Heart right ventricle (tissue), 16 donors: ENCODE measurements at regions of chr6 and their contacts with region 1.

Region 1: GRCh38 chr6:104771258-104771832 is 88.4 kb downstream of the HACE1 start:
- DNase-seq: no peak
- ATAC-seq: peak in 1 of 8 donors; percentile 33
- H3K4me3 ChIP-seq: no peak overlapping the region
- H3K27ac ChIP-seq: no peak overlapping the region
- H3K4me1 ChIP-seq: no peaks in the 10 kb centered on the region
- H3K27me3 ChIP-seq: no peaks in the 10 kb centered on the region
- CTCF ChIP-seq: peak; percentile 13 to 70 (median 55)

Region 2: GRCh38 chr6:104325341-104326172 is 445.8 kb before region 1 on chr6:
- intact Hi-C with region 1: loop called in 1 of 10 experiments (anchors 10 kb)
- DNase-seq: no peak
- ATAC-seq: no peak
- H3K4me3 ChIP-seq: no peak overlapping the region
- H3K27ac ChIP-seq: no peak overlapping the region
- H3K4me1 ChIP-seq: peaks cover 0 to 5% (median 0%) of the 10 kb centered on the region in 9 donors
- H3K27me3 ChIP-seq: peaks cover 0 to 15% (median 0%) of the 10 kb centered on the region in 7 donors
- CTCF ChIP-seq: peak in 7 of 9 donors; percentile 29 to 55 (median 38)

Region 3: GRCh38 chr6:104525677-104526312 is 245.6 kb before region 1 on chr6:
- intact Hi-C with region 1: loop called in 3 of 10 experiments (anchors 2 to 10 kb)
- DNase-seq: peak; percentile 55 to 59
- ATAC-seq: peak; percentile 69 to 91 (median 87)
- H3K4me3 ChIP-seq: peak overlapping the region in 7 of 10 donors; percentile 3 to 44 (median 40)
- H3K27ac ChIP-seq: no peak overlapping the region
- H3K4me1 ChIP-seq: peaks cover 0 to 21% (median 11%) of the 10 kb centered on the region in 9 donors
- H3K27me3 ChIP-seq: peaks cover 0 to 17% (median 0%) of the 10 kb centered on the region in 7 donors
- CTCF ChIP-seq: peak; percentile 82 to 96 (median 92)

Region 4: DNA sequence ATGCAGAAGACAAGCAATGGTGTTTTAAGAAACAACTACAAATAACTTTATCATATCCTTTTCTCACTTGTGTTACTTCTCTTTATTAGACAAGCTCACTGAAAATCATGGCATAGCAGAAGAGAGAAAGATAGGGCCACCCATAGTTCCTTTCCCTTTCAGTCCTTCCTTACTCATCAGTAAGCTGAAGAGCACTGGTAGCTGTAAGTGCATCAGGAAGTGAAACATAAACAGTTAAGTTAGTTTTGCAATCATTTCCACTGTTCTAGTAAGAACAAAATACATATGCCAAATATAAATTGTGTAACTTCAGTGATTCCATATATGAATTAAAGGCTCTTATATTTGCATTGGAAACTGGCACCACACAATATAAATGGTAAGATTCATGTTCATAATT is 131.7 kb before region 1 on chr6:
- intact Hi-C with region 1: loop called in 2 of 10 experiments (anchors 5 to 10 kb)
- DNase-seq: no peak
- ATAC-seq: peak in 4 of 8 donors; percentile 46 to 59 (median 52)
- H3K4me3 ChIP-seq: no peak overlapping the region
- H3K27ac ChIP-seq: peak overlapping the region in 8 of 10 donors; percentile 10 to 71 (median 49)
- H3K4me1 ChIP-seq: peaks cover 0 to 46% (median 16%) of the 10 kb centered on the region in 9 donors
- H3K27me3 ChIP-seq: no peaks in the 10 kb centered on the region
- CTCF ChIP-seq: no peak

Region 5: DNA sequence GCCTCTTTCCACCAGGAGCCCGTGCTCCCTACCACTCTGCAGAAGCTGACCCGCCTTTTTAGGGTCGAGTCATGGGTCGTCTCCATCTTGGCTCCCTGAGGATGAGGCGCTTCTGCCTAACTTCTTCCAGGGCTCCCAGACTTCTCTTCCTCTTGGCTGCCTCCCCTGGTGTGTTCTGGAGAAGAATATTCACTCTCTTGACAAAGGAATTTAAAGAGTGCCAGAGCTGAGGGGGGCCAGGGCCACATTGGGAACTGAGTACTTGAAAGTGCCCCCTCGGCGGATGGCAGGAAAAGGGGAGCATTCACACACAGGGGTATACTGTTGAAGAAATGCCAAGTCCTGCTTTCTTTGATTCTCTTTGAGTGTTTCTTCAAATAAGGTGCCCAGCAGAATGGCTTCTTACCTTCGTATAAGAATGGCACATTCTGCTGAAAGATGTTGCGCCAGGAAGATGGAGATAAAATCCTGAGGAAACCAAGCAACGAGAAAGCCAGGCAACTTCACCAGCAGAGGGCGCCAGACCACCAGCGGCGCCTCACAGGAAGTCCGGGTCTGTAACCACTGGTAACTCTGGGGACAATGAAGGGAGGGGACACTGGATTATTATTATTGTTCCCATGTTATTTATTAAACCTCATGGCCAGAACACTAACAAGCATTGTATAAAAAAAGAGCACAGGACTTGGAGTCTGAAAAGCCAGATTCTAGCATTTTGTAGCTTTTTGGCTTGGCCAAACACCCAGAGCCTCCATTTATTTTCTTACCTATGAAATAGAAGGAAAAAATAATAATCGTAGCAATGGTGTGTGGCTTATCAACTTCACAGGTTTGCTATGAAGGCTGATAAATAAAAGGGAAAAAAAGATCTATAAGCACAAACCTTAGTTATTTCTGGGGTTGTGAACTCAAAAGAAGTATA is 88.4 kb before region 1 on chr6:
- intact Hi-C with region 1: loop called in 7 of 10 experiments (anchors 2 to 10 kb)
- DNase-seq: peak; percentile 18 to 59
- ATAC-seq: peak in 3 of 8 donors; percentile 37 to 53 (median 46)
- H3K4me3 ChIP-seq: no peak overlapping the region
- H3K27ac ChIP-seq: no peak overlapping the region
- H3K4me1 ChIP-seq: peaks cover 0 to 5% (median 0%) of the 10 kb centered on the region in 9 donors
- H3K27me3 ChIP-seq: no peaks in the 10 kb centered on the region
- CTCF ChIP-seq: peak; percentile 45 to 89 (median 65)

Region 6: DNA sequence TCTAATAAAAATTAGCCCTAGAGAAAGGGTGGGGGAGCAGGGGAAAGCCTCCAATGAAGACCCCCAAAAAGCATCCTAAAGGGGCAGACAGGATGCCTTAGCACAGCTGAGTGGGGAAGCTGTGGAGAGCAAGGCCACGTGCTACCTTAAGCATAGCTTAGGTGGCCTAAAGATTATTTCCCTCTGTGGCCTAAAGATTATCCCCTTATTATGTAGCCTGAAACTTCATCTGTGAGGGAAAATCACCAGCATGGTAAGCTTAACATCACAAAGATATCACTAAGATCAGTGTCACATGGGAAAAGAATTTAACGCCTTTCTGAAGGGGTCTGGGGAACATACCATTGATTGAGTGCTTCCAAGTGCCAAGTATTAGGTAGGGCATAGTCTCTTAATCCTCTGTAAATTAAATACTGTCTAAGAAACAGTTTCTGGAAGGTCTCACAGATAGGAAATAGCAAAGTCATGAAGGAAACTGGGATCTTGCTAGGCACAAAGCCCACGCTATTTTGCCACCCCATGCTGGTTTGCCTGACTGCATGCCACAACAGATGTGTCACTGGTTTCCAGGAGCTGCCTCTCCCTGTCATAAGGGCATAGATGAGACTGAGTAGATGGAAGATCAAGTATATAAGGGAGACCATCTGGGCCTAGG is 81.7 kb before region 1 on chr6:
- intact Hi-C with region 1: loop called in 4 of 10 experiments (anchors 5 to 10 kb)
- DNase-seq: no peak
- ATAC-seq: no peak
- H3K4me3 ChIP-seq: no peak overlapping the region
- H3K27ac ChIP-seq: no peak overlapping the region
- H3K4me1 ChIP-seq: no peaks in the 10 kb centered on the region
- H3K27me3 ChIP-seq: no peaks in the 10 kb centered on the region
- CTCF ChIP-seq: no peak